Dendritic cell treated with granulocyte-macrophage colony-stimulating factor and Interleukin-4, amounts not matched to agents 40 ng/mL and 50 ng/mL, for 4 days (primary cell): ENCODE measurements at regions of chr15 and their contacts with region 1.

Region 1: GRCh38 chr15:40893733-40894688 is at the start of gene VPS18:
- H3K4me3 Mint-ChIP-seq: peak within 1 kb of the TSS; percentile 100
- H3K27ac Mint-ChIP-seq: peak within 1 kb of the TSS; percentile 100
- H3K4me1 Mint-ChIP-seq: peaks cover 43% of the 10 kb centered on the region
- H3K27me3 Mint-ChIP-seq: peaks cover 7% of the 10 kb centered on the region

Region 2: GRCh38 chr15:40357723-40358470 is 536.1 kb before region 1 on chr15 and contains the start of gene DISP2:
- intact Hi-C with region 1: no loop called
- H3K4me3 Mint-ChIP-seq: peak within 1 kb of the TSS; percentile 75
- H3K27ac Mint-ChIP-seq: no peak within 1 kb of the TSS
- H3K4me1 Mint-ChIP-seq: peaks cover 21% of the 10 kb centered on the region
- H3K27me3 Mint-ChIP-seq: peaks cover 49% of the 10 kb centered on the region

Region 3: DNA sequence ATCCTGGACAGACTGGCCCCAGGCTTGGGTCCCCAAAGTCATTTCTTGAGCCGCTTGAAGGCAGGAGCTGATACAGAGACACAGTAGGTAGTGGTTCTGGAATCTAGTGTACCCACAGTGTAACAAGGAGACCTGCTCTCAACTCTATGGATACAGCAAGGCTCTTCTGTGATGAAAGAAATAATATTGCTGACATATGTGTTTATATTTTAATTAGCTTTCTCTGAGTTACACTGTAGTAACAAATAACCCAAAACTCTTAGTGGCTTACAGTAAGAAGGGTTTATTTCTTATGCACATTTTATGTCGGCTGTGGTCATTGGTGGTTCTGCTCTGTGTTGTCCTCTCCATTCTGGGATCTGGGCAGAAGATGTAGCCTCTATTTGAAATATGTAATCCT is 377.7 kb before region 1 on chr15:
- intact Hi-C with region 1: loop called (anchors 5 kb)
- H3K4me3 Mint-ChIP-seq: no peak overlapping the region
- H3K27ac Mint-ChIP-seq: no peak overlapping the region
- H3K4me1 Mint-ChIP-seq: peaks cover 16% of the 10 kb centered on the region
- H3K27me3 Mint-ChIP-seq: peaks cover 33% of the 10 kb centered on the region

Region 4: GRCh38 chr15:40593588-40594428 is 300.2 kb before region 1 on chr15 and contains the start of gene KNL1:
- intact Hi-C with region 1: loop called (anchors 5 kb)
- H3K4me3 Mint-ChIP-seq: peak within 1 kb of the TSS; percentile 92
- H3K27ac Mint-ChIP-seq: peak within 1 kb of the TSS; percentile 100
- H3K4me1 Mint-ChIP-seq: peaks cover 17% of the 10 kb centered on the region
- H3K27me3 Mint-ChIP-seq: peaks cover 7% of the 10 kb centered on the region

Region 5: DNA sequence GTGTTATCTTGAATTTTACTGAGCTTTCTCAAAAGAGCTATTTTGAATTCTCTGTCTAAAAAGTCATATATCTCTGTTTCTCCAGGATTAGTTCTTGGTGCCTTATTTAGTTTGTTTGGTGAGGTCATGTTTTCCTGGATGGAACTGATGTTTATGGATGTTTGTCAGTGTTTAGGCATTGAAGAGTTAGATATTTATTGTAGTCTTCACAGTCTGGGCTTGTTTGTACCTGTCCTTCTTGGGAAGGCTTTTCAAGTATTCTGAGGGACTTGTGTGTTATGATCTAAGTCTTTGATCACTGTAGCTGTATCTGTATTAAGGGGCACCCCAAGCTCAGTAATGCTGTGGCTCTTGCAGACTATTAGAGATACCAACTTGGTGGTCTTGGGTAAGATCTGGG is 209.6 kb before region 1 on chr15:
- intact Hi-C with region 1: loop called (anchors 5 kb)
- H3K4me3 Mint-ChIP-seq: no peak overlapping the region
- H3K27ac Mint-ChIP-seq: no peak overlapping the region
- H3K4me1 Mint-ChIP-seq: no peaks in the 10 kb centered on the region
- H3K27me3 Mint-ChIP-seq: no peaks in the 10 kb centered on the region

Region 6: DNA sequence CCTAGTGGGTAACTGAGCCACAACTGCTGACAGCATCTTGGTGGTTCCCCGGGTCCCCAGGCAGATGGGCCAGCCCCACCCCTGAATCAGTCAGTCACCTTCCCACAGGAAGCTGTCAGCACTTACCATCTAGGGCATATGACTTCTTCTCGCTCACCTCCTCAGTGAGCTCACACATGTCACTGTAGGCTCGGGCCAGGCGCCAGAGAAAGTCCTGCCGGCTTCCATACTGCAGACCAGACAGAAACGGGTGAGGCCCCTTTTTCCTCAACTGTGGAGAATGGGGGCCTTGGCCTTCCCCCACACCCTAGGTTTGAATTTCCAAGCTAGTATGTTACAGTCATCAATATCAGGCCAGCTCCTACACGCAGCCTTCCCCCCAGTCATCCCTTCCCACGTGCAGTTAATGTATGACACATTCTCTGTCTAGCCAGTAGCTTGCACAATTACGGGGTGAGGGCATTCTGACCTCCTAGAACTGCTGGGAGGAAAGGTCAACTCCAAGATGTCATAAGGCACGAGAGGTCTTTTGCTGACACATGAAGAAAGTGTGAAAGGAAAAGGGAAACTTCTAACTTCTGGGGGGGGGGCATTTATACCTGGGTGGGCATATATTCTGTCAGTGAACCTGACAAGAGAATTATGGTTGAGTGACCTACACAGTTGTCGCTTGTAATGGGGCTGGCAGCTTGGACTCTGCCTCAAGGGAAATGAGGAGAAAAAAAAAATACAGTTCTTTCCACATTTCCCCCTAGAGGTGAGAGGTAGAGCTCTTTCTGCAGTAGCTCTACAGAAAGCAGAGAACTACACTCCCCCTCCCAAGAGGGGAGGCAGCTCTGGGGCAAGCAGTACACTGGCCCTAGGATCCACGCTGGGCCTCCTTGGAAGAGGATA is 149.8 kb before region 1 on chr15:
- intact Hi-C with region 1: loop called (anchors 5 kb)
- H3K4me3 Mint-ChIP-seq: no peak overlapping the region
- H3K27ac Mint-ChIP-seq: no peak overlapping the region
- H3K4me1 Mint-ChIP-seq: peaks cover 23% of the 10 kb centered on the region
- H3K27me3 Mint-ChIP-seq: no peaks in the 10 kb centered on the region

Region 7: DNA sequence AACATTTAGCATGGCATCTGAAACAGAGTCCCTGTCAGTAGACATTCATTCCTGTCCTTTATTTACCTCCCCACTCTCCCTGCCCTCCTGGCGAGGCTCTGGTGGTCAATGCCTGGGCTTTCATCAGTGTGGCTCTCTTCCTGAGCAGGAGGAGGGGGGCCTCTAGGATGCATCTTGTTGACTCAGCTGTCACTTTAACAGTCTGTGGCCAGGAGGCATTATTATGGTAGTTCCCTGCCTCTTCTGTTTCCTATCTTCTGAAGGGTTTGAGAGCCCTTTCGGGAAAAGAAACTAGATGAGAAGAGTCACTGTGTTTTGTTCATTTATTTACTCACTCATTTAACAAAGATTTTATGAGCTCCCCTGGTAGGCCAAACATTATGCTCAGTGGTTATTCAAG is 63.1 kb before region 1 on chr15:
- intact Hi-C with region 1: no loop called
- H3K4me3 Mint-ChIP-seq: no peak overlapping the region
- H3K27ac Mint-ChIP-seq: no peak overlapping the region
- H3K4me1 Mint-ChIP-seq: no peaks in the 10 kb centered on the region
- H3K27me3 Mint-ChIP-seq: peaks cover 8% of the 10 kb centered on the region

Region 8: DNA sequence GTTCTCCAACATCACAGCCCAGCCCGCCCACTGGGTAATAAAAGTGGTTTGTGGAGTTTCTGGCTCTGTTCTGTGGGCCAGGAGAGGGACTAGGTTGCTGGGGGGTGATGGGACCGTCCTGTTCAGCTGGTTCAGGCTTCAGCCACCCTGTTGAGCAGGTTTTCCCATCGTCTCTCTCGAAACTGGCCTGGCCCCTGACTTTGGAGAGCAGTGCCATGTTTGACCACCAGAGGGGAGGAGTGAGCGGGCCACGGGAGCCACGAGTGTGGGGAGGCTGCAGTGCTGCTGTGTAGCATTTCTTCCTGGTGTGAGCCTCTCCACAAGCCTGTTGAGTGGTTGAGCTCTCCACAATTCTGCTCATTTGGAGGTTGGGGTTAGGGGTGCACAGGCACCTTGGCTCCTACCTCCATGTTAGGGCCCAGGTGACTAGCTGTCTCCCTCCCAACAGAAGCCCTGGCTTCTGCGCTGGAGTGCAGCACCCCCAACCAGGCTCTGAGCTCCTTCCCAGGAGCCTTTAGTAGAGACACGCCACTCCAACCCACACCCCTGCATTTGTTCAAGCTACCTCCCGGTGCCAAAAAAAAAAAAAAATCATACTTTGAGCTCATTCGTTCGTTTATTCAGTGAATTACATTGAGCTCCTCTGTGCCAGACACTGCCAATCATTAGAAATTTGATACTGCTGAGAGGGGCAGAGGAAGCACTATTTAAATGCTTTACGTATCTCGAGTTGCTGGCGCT is 36.2 kb before region 1 on chr15:
- intact Hi-C with region 1: loop called (anchors 1 kb)
- H3K4me3 Mint-ChIP-seq: no peak overlapping the region
- H3K27ac Mint-ChIP-seq: peak overlapping the region; percentile 77
- H3K4me1 Mint-ChIP-seq: peaks cover 34% of the 10 kb centered on the region
- H3K27me3 Mint-ChIP-seq: no peaks in the 10 kb centered on the region

Region 9: DNA sequence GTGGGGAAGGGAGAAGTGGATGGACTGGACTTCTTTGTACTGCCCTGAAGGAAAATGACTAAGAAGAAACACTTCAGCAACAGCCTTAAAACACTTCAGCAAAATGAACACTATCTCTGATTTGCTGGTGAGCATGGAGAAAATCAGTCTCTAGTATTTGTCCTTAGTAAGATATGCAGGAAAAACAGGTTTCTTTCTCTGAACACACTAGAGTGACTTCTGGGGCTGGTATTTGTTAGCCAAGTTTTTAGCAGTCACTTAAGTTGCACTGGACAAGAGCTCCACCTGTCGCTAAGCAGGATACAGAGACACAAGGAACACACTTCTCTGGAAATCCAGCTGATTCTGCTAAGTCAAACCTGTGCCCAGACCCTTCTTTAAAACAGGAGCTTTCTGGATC is 124.5 kb after region 1 on chr15:
- intact Hi-C with region 1: no loop called
- H3K4me3 Mint-ChIP-seq: no peak overlapping the region
- H3K27ac Mint-ChIP-seq: no peak overlapping the region
- H3K4me1 Mint-ChIP-seq: peaks cover 45% of the 10 kb centered on the region
- H3K27me3 Mint-ChIP-seq: no peaks in the 10 kb centered on the region

Region 10: DNA sequence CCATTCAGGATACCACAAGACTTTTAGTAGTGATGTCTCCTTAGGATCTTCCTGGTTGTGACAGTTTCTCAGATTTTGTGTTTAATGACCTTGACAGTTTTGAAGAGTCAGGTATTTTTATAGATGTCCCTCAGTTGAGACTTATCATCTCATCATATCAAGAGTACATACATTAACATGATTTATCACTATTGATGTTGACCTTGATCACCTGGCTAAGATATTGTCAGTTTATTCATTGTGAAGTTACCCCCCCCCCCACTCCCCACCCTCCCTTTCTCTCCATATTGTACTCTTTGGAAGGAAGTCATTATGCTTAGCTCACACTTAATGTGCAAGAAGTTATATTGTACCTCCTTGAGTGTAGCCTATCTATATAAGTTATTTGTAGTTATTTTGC is 809.1 kb after region 1 on chr15:
- intact Hi-C with region 1: no loop called
- H3K4me3 Mint-ChIP-seq: no peak overlapping the region
- H3K27ac Mint-ChIP-seq: no peak overlapping the region
- H3K4me1 Mint-ChIP-seq: no peaks in the 10 kb centered on the region
- H3K27me3 Mint-ChIP-seq: no peaks in the 10 kb centered on the region